ENCODE measurements at regions of chr11 and their contacts with region 1.

Region 1: GRCh38 chr11:95567685-95568084 is 221.9 kb downstream of the FAM76B start:
- DNase-seq: no peak
- H3K4me3 Mint-ChIP-seq: no peak overlapping the region
- H3K27ac Mint-ChIP-seq: no peak overlapping the region
- H3K4me1 Mint-ChIP-seq: peaks cover 31% of the 10 kb centered on the region
- H3K27me3 Mint-ChIP-seq: no peaks in the 10 kb centered on the region

Region 2: GRCh38 chr11:95505927-95506426 is 61.7 kb before region 1 on chr11:
- intact Hi-C with region 1: loop called (anchors 10 kb)
- DNase-seq: no peak
- H3K4me3 Mint-ChIP-seq: no peak overlapping the region
- H3K27ac Mint-ChIP-seq: no peak overlapping the region
- H3K4me1 Mint-ChIP-seq: peaks cover 9% of the 10 kb centered on the region
- H3K27me3 Mint-ChIP-seq: no peaks in the 10 kb centered on the region

Region 3: DNA sequence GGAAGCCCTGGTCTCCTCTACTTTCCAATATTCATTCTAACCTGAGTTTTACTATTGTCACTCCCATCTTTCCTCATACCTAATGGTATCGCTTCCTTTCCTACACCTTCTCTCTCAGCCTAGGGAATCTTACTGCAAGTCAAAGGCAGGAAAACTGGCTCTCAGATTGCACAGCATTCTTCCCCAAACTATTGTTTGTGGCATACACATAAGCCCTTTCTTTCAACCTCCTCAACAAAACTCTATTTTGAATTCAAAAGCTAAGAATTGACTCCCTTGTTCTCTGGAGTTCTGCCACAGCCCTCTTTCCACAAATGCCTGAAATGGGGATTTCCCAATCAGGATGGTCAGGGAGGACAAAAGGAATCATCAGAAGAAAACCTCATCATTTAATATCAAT is 40.4 kb after region 1 on chr11:
- intact Hi-C with region 1: no loop called
- DNase-seq: no peak
- H3K4me3 Mint-ChIP-seq: no peak overlapping the region
- H3K27ac Mint-ChIP-seq: no peak overlapping the region
- H3K4me1 Mint-ChIP-seq: no peaks in the 10 kb centered on the region
- H3K27me3 Mint-ChIP-seq: no peaks in the 10 kb centered on the region